AG04449 (cell line): ENCODE measurements at regions of chr7 and their contacts with region 1.

Region 1: DNA sequence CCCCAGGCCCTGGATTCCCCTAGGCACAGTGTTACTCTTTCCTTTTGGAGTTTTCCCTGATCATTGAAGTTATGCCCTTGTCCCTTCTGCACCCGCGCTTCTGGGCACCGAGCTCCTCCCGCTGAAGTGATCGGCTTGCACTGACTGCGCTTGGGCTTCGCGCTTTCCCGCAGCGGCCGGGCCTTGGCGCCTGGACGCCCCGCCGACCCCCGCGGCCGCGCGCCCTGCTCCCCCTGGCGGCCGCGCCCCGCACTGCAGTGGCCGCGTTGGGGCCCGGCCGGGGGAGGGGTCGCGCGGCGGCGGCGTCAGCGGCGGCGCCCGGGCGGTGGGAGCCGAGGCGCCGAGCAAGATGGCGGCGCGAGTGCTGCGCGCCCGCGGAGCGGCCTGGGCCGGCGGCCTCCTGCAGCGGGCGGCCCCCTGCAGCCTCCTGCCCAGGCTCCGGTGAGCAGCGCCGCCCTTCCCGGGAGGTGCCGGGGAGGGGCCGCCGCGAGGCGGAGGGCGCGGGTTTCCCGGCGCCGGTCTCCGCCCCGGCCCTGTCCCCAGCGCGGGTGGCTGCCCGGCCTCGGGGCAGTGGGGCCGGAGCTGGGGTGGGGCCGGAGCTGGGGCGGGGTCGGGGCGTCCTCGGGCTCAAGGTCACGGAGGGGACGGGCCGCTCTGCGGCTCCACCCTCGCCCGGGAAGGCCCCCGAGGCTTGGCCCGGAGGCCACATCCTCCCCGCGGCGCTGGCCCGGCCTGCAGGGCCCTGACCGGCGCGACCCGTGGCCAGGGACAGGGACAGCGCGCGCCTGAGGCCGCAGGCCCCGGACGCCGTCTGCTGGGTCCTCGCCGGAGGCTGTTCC is at the start of gene NIPSNAP2:
- DNase-seq: no peak
- H3K4me3 ChIP-seq: peak within 1 kb of the TSS; percentile 69
- CTCF ChIP-seq: peak; percentile 26

Region 2: GRCh38 chr7:55887821-55888247 is 76.6 kb before region 1 on chr7:
- CTCF ChIA-PET with region 1: no interaction called
- POLR2A ChIA-PET with region 1: no interaction called
- DNase-seq: no peak
- H3K4me3 ChIP-seq: peak overlapping the region; percentile 67
- CTCF ChIP-seq: no peak

Region 3: GRCh38 chr7:55953707-55954475 is 10.6 kb before region 1 on chr7:
- CTCF ChIA-PET with region 1: interaction called, 28 read pairs
- POLR2A ChIA-PET with region 1: no interaction called
- DNase-seq: no peak
- H3K4me3 ChIP-seq: no peak overlapping the region
- CTCF ChIP-seq: no peak

Region 4: GRCh38 chr7:55977831-55978230 is 13.4 kb after region 1 on chr7:
- CTCF ChIA-PET with region 1: interaction called, 22 read pairs
- POLR2A ChIA-PET with region 1: interaction called, 6 read pairs
- DNase-seq: peak; percentile 67
- H3K4me3 ChIP-seq: no peak overlapping the region
- CTCF ChIP-seq: no peak

Region 5: DNA sequence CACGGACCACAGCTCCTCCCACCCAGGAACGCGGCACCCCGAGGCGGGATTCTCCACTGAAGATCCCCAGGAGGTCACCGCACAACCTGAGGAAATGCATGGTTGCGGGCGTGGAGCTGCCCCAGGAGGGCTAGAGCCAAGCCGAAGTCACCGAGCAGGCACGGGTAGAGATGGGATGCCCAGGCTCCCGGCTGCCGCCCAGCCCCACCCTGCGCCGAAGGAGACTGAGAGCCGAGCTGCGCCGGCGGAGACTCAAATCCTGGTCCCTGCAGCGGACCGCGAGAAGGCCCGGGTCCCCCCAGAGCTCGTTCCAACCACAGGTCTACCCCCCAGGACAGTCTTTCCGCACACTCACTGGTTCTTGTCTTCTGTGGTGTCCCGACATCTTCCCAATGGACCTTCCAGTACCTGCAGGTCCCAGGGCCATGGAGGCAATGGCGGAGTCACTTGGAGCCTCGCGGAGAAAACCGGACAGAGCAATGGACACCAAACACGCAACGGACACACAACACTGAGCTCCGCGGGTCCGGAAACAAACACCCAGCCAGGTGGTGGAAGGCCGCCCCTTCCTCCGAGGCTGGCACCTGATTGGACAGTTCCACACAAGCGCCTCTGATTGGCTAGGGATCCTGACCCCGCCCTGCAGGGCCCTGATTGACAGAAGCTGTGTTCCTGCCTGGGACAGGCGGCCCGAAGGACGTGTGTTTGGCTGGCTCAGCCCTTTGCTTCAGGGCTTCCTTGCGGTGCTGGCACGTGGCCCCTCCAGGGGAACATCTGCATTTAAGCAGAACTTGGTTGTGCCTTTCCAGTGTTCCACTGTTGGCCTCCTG is 483.6 kb after region 1 on chr7:
- CTCF ChIA-PET with region 1: no interaction called
- POLR2A ChIA-PET with region 1: no interaction called
- DNase-seq: no peak
- H3K4me3 ChIP-seq: no peak overlapping the region
- CTCF ChIP-seq: no peak